AG04450 (cell line): ENCODE measurements at regions of chr4 and their contacts with region 1.

Region 1: DNA sequence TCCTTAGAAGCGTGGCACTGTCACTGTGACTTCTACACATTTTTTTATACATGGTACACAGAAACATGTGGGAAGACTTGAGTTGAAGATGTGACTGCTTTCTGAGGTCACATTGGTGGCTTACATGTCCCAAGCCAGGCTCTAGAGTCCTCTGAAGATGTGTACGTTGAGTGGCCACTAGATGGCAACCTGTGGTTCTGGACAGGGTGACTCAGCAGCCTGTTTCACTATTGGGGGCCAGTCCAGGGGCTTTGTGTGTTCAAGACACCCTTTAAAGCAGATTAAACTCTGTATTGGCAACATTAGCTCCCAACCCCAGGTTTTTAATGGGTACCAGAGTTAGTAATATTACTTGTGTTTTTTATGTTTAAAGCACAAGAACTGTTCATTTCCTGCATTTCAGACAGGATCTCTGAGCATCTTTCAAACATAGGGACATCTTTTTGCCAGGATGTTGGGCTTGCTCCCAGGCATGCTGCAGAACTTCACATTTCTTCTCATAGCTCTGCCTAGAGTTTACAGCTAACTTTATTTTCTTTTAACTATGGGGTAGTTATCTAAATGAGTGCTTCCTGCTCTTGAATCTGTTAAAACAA is 53.0 kb downstream of the DCUN1D4 start:
- DNase-seq: peak; percentile 33
- H3K4me3 ChIP-seq: no peak overlapping the region
- H3K27ac ChIP-seq: no peak overlapping the region
- H3K27me3 ChIP-seq: no peaks in the 10 kb centered on the region
- CTCF ChIP-seq: peak; percentile 90

Region 2: DNA sequence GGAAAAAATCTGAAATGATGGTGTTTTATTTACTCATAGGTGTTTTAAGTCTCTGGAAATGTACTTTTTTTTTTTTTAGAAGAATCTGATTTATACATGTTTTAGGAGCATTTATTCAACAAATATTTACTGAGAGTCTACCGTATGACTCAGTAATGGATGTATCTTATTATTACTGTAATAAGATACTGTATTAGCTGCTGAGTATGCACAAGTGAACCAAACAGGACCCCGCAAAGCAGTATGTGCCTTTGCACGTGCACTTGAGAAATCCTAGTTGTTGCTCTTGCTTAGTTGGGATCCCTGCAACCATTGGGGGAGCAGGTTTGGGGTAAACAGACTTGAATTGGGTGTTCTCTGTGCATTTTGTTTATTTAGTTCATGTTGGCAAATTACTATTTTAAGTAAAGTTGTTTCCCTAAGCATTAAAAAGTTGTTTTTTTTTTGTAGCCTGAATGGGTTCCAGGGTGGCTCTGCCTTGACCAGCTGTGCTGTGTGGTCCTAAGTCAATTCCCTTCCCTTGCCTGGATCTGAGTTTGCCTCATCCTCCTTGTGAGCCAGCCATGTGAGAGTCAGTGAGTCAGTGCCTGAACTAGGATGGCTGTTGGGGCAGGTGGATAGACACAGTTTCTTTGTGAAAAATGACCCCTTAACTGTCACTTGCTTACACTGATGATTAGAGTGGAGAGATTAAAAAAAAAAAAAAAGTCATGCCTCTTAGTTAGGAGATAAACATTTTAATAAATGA is 25.3 kb before region 1 on chr4:
- CTCF ChIA-PET with region 1: interaction called, 14 read pairs
- POLR2A ChIA-PET with region 1: no interaction called
- DNase-seq: no peak
- H3K4me3 ChIP-seq: no peak overlapping the region
- H3K27ac ChIP-seq: no peak overlapping the region
- H3K27me3 ChIP-seq: no peaks in the 10 kb centered on the region
- CTCF ChIP-seq: no peak

Region 3: DNA sequence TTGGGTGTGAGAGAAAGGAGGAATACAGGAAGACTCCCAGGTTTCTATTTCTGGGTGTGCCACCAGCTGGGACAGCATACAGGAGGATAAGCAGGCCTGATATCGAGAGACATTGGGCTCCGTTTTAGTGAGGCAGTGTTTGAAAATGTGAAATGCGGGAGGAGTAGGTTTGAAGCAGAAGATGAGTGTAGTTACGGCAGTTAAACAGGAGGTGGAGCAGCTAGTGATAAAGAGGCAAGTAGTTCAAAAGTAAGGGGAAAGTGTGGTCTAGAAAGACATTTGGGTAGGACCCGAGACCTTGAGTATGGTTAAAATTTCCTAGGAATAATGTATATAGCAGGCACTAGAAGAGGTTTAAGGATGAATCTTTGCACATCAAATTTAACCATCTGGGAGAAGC is 10.5 kb before region 1 on chr4:
- CTCF ChIA-PET with region 1: interaction called, 54 read pairs
- POLR2A ChIA-PET with region 1: no interaction called
- DNase-seq: no peak
- H3K4me3 ChIP-seq: no peak overlapping the region
- H3K27ac ChIP-seq: no peak overlapping the region
- H3K27me3 ChIP-seq: no peaks in the 10 kb centered on the region
- CTCF ChIP-seq: peak; percentile 49

Region 4: GRCh38 chr4:51918251-51918650 is 22.3 kb after region 1 on chr4:
- CTCF ChIA-PET with region 1: interaction called, 31 read pairs
- POLR2A ChIA-PET with region 1: no interaction called
- DNase-seq: peak; percentile 6
- H3K4me3 ChIP-seq: no peak overlapping the region
- H3K27ac ChIP-seq: no peak overlapping the region
- H3K27me3 ChIP-seq: no peaks in the 10 kb centered on the region
- CTCF ChIP-seq: no peak

Region 5: GRCh38 chr4:52028969-52029368 is 133.1 kb after region 1 on chr4:
- CTCF ChIA-PET with region 1: interaction called, 27 read pairs
- POLR2A ChIA-PET with region 1: no interaction called
- DNase-seq: peak; percentile 26
- H3K4me3 ChIP-seq: no peak overlapping the region
- H3K27ac ChIP-seq: no peak overlapping the region
- H3K27me3 ChIP-seq: no peaks in the 10 kb centered on the region
- CTCF ChIP-seq: no peak

Region 6: GRCh38 chr4:52368895-52369294 is 473.0 kb after region 1 on chr4:
- CTCF ChIA-PET with region 1: no interaction called
- POLR2A ChIA-PET with region 1: no interaction called
- DNase-seq: no peak
- H3K4me3 ChIP-seq: no peak overlapping the region
- H3K27ac ChIP-seq: no peak overlapping the region
- H3K27me3 ChIP-seq: peaks cover 4% of the 10 kb centered on the region
- CTCF ChIP-seq: no peak